Activated CD8-positive, alpha-beta memory T cell treated with anti-CD3 and anti-CD28 coated beads, Interleukin-2, amount 10 ng/mL, durations not matched to agents 7 days and 5 days (primary cell): ENCODE measurements at regions of chr17 and their contacts with region 1.

Region 1: GRCh38 chr17:80780381-80781198 is 211.1 kb upstream of the CHMP6 start:
- DNase-seq: peak; percentile 84
- ATAC-seq: peak; percentile 72
- H3K4me3 Mint-ChIP-seq: peak overlapping the region; percentile 68
- H3K27ac Mint-ChIP-seq: peak overlapping the region; percentile 95
- H3K4me1 Mint-ChIP-seq: peaks cover 81% of the 10 kb centered on the region
- H3K27me3 Mint-ChIP-seq: no peaks in the 10 kb centered on the region

Region 2: DNA sequence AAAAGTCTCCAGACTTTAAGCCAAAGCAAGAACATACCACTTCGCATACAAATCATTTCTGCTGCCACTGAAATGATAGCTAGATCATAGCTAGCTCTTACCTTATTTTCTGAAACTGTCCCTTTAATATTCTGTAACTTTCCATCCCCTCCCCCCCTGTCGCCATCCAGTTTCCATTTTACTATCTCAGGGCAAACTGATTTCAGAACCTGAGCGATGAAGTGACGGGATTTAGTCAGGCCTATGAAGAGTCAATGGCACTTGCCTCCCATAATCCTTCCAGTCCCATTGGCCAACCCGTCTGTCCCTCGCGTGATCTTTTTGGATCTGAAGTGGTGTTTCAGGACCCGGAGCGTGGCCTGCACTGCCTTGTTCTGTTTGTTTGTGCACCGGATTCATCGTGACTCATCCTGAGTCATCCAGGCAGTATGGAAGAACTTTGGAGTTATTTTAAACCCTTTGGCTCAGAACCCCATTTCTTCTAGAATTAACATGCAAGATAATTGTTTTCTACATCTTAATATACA is 11.2 kb after region 1 on chr17:
- CTCF ChIA-PET with region 1: interaction called, 27 read pairs
- DNase-seq: peak; percentile 80
- ATAC-seq: peak; percentile 71
- H3K4me3 Mint-ChIP-seq: peak overlapping the region; percentile 68
- H3K27ac Mint-ChIP-seq: peak overlapping the region; percentile 98
- H3K4me1 Mint-ChIP-seq: peaks cover 66% of the 10 kb centered on the region
- H3K27me3 Mint-ChIP-seq: no peaks in the 10 kb centered on the region

Region 3: DNA sequence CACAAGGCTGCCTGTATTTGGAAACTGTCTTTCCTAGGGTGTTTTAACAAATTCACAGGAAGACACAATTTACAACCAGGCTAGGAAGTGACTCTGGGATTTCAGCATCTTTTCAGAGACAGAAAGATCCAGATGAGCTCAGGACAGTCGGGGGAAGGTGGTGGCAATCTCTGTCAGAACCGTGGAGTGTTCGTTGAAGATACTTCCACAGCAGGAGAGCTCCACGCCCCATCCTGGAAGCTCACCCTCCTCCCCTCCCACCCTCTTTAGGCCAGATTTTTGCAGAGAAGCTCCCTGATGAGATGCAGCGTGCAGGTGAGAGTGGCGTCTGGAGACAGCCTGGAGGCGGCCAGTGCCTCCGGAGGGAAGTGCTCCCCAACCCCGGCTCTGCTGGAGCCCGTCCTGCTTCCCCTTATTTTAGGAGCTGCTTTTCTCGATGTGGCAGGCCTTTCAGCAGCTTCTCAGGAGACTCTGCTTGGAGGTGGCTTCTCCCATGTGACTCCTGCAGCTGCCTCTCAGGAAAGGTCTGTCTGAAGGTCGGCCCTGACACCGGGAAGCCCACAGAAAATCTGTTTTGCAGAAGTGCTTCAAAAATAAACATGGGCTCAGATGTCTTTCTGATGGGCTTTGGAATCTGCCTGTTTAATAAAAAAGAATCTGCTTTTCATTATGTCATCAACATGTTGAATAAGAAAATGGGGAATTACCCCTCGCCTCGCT is 24.6 kb after region 1 on chr17:
- CTCF ChIA-PET with region 1: no interaction called
- DNase-seq: no peak
- ATAC-seq: no peak
- H3K4me3 Mint-ChIP-seq: no peak overlapping the region
- H3K27ac Mint-ChIP-seq: peak overlapping the region; percentile 33
- H3K4me1 Mint-ChIP-seq: peaks cover 9% of the 10 kb centered on the region
- H3K27me3 Mint-ChIP-seq: no peaks in the 10 kb centered on the region

Region 4: GRCh38 chr17:80826955-80827645 is 46.5 kb after region 1 on chr17:
- CTCF ChIA-PET with region 1: no interaction called
- DNase-seq: no peak
- ATAC-seq: no peak
- H3K4me3 Mint-ChIP-seq: no peak overlapping the region
- H3K27ac Mint-ChIP-seq: peak overlapping the region; percentile 49
- H3K4me1 Mint-ChIP-seq: peaks cover 49% of the 10 kb centered on the region
- H3K27me3 Mint-ChIP-seq: no peaks in the 10 kb centered on the region